HEK293 (cell line): ENCODE measurements at regions of chr1 and their contacts with region 1.

Region 1: GRCh38 chr1:27392096-27392777 is at the start of gene GPR3:
- H3K4me3 ChIP-seq: peak within 1 kb of the TSS; percentile 45
- H3K27ac ChIP-seq: no peak within 1 kb of the TSS
- H3K4me1 ChIP-seq: no peaks in the 10 kb centered on the region
- CTCF ChIP-seq: peak; percentile 83

Region 2: DNA sequence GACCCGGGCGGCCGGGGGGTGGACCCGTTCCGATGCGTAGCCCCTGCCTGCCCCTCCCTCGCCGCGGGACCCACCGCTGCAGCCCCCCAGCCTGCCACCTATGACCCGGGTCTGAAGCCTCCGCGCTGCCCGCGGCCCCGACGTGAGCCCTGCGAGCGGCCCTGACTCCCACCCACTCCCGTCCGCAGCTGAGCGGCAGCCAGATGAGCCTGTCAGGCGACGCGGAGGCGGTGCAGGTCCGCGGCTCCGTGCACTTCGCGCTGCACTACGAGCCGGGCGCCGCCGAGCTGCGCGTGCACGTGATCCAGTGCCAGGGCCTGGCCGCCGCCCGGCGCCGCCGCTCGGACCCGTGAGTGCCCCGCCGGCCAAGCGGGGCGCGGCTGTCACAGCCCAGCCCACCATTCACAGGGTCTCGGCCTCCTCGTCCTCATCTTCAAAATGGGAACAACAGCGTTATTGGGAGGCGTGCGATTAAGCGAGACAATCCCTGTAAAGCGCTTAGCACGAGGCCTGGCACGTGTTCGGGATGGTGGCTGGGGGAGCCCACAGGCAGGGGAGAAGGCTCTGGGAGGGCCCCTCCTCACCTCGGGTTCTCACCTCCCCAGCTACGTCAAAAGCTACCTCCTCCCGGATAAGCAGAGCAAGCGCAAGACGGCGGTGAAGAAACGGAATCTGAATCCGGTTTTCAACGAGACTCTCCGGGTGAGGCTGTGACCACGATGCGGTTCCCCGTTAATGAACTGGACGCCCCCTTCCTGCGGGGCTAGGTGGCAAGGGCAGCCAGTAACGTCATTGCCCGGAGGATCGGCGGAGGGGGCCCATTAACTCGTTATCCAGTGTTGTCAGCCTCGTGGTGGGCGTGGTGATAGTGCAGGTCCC is 42.2 kb before region 1 on chr1:
- CTCF ChIA-PET with region 1: interaction called, 10 read pairs
- POLR2A ChIA-PET with region 1: no interaction called
- H3K4me3 ChIP-seq: no peak overlapping the region; the same call in 1 of the 2 replicates
- H3K27ac ChIP-seq: no peak overlapping the region
- H3K4me1 ChIP-seq: peaks cover 4% of the 10 kb centered on the region
- CTCF ChIP-seq: no peak

Region 3: DNA sequence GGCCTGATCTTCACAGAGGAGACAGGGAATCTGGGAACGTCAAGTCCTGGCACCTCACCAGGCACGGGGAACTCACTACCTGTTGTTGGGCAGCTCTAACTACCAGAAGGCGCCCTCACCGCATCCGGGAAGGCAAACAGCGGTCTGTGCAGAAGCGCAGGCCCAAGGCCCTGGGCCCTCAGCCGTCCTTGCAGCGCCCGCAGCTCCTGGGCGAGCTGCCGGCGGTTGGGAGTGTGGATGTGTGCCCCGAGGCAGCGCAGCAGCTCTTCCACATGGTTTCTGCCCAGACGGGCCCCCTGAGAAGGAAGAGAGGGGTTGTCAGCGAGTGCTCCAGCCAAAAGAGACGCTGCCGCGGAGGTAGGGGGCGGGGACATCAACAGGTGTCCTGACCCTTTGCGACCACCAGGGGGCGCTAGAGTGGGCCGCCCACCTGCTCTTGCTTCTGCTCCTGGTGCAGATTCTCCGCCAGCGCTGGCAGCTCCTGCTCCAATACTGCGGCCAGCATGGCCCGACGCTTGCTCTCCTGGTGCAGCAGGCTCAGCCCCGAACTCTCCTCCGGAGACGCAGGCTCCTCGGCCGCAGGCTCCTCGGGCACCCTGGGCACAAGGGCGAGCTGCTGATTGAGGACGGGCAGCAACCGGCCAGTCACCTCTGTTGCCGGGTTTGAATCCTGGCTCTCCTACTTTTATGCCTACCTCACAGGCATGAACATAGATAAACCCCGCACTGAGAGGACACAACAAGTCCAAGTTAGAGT is 34.8 kb before region 1 on chr1:
- CTCF ChIA-PET with region 1: interaction called, 33 read pairs
- POLR2A ChIA-PET with region 1: no interaction called
- H3K4me3 ChIP-seq: no peak overlapping the region
- H3K27ac ChIP-seq: no peak overlapping the region
- H3K4me1 ChIP-seq: no peaks in the 10 kb centered on the region
- CTCF ChIP-seq: peak; percentile 94

Region 4: GRCh38 chr1:27365372-27366112 is 26.7 kb before region 1 on chr1:
- CTCF ChIA-PET with region 1: interaction called, 23 read pairs
- POLR2A ChIA-PET with region 1: interaction called, 9 read pairs
- H3K4me3 ChIP-seq: peak overlapping the region; percentile 60
- H3K27ac ChIP-seq: peak overlapping the region; percentile 78
- H3K4me1 ChIP-seq: peaks cover 2% of the 10 kb centered on the region; the same call in 1 of the 2 replicates
- CTCF ChIP-seq: no peak